ENCODE measurements at regions of chr1 and their contacts with region 1.

Region 1: GRCh38 chr1:161531986-161532643 is 7.8 kb downstream of the HSPA6 start:
- DNase-seq: no peak
- ATAC-seq: no peak
- H3K4me3 ChIP-seq: peak overlapping the region; percentile 69
- H3K27ac ChIP-seq: no peak overlapping the region
- H3K4me1 ChIP-seq: peaks cover 12% of the 10 kb centered on the region
- H3K27me3 ChIP-seq: no peaks in the 10 kb centered on the region
- CTCF ChIP-seq: no peak

Region 2: DNA sequence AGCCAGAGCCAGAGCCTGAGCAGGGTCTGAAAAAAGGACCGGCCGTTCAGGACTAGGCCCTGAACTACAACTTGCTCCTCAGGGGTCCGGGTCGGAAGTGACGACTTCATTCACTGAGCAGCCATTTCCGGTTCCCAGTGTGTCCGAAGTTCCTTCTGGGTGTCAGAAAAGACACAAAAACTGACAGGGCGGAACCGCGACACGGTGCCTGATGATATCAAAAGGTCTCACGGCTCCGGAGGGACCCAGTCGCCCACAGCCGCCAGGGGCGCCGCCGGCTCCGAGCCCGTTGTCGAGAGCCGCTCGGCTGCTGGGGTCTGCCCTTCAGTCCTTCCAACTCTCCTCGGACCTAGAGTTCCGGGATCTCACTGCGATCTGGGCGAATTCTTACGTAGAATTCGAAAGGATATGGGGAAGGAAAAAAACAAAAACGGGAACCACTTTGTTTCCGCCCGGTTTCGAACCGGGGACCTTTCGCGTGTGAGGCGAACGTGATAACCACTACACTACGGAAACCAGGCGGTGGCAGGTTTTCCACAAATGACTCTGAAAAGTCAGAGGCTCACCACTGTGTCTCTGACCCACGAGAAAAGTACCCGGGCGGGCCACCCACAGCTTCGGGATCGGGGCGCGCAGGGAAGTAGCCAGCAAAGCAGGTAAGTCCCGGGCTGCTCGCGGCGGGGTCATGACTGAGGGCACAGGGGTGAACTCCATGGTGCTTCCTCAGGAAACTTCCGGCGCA is 132.7 kb before region 1 on chr1:
- CTCF ChIA-PET with region 1: no interaction called
- POLR2A ChIA-PET with region 1: interaction called, 4 read pairs
- intact Hi-C with region 1: loop called (anchors 10 kb)
- DNase-seq: peak; percentile 96
- ATAC-seq: peak; percentile 30
- H3K4me3 ChIP-seq: peak overlapping the region; percentile 71
- H3K27ac ChIP-seq: peak overlapping the region; percentile 94
- H3K4me1 ChIP-seq: peaks cover 60% of the 10 kb centered on the region
- H3K27me3 ChIP-seq: no peaks in the 10 kb centered on the region
- CTCF ChIP-seq: peak; percentile 59